H1 (cell line): ENCODE measurements at regions of chr3 and their contacts with region 1.

Region 1: DNA sequence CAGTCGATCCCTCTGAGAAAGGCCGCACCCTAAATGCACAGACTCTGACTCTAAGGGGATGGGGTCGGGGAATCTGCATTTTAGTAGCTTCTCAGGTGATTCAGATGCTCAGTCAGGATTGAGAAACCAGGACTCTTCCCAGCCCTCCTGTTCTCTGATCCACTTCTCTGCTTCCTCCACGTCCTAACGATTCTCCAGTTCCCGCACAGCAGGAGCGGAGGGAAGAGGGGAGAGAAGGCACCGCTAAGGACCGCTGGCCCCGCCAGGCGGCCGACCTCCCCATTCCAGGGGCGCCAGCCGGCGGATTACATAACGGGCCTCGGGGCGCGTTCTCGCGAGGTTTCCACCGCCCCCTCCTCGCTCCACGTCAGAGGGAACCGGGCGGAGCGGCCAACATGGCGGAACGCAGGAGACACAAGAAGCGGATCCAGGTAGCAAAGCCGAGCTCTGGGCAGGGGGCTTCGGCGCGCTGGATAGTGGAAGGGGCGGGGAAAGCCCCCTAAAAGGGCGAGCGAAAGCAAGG is at the start of gene SEC62:
- DNase-seq: peak; percentile 85 to 98
- H3K4me3 ChIP-seq: peak within 1 kb of the TSS; percentile 85 to 98 (median 90)
- H3K27ac ChIP-seq: peak within 1 kb of the TSS; percentile 82
- H3K4me1 ChIP-seq: peaks cover 0 to 12% (median 1%) of the 10 kb centered on the region in 4 experiments; a peak in 3 of 7 replicates
- H3K27me3 ChIP-seq: no peaks in the 10 kb centered on the region
- CTCF ChIP-seq: peak; percentile 38 to 68 (median 47)
- EP300 ChIP-seq: peak in 1 of 2 experiments; percentile 65; a peak in 1 of 3 replicates
- POLR2A ChIP-seq: peak; percentile 93 to 95
- RAD21 ChIP-seq: peak; percentile 61 to 72
- total RNA-seq, gene SEC62: 67.8 and 68.1 TPM in 2 replicates

Region 2: GRCh38 chr3:169863458-169863899 is 103.0 kb before region 1 on chr3:
- CTCF ChIA-PET with region 1: interaction called, 37 read pairs
- POLR2A ChIA-PET with region 1: interaction called, 21 read pairs
- DNase-seq: peak; percentile 58 to 87
- H3K4me3 ChIP-seq: no peak overlapping the region
- H3K27ac ChIP-seq: no peak overlapping the region
- H3K4me1 ChIP-seq: peaks cover 2 to 5% (median 4%) of the 10 kb centered on the region in 4 experiments; a peak in 5 of 7 replicates
- H3K27me3 ChIP-seq: no peaks in the 10 kb centered on the region
- CTCF ChIP-seq: peak; percentile 62 to 95 (median 78)
- EP300 ChIP-seq: no peak
- POLR2A ChIP-seq: no peak
- RAD21 ChIP-seq: peak; percentile 93 to 96

Region 3: GRCh38 chr3:169948559-169949448 is 17.7 kb before region 1 on chr3:
- CTCF ChIA-PET with region 1: no interaction called
- POLR2A ChIA-PET with region 1: interaction called, 22 read pairs
- DNase-seq: no peak
- H3K4me3 ChIP-seq: no peak overlapping the region
- H3K27ac ChIP-seq: no peak overlapping the region
- H3K4me1 ChIP-seq: no peaks in the 10 kb centered on the region
- H3K27me3 ChIP-seq: no peaks in the 10 kb centered on the region
- CTCF ChIP-seq: no peak
- EP300 ChIP-seq: no peak
- POLR2A ChIP-seq: no peak
- RAD21 ChIP-seq: no peak

Region 4: DNA sequence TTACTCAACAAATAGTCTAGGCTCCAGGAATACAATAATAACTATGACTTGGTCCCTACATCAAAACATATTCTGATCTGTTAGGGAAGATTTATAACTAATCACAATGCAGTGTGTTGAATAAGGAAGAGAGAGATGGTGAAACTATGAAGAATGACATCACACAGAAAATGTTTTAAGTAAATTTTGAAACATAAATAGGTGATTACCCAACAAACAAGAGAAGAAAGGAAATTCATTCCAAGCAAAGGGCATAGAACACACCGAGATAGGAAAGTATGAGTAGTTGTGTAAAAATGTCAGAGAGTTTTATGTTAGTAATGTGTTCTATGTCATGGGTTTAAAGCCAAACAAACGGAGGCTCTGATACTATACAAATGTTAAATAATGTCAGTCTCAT is 13.6 kb after region 1 on chr3:
- CTCF ChIA-PET with region 1: interaction called, 3 read pairs
- POLR2A ChIA-PET with region 1: interaction called, 16 read pairs
- DNase-seq: no peak
- H3K4me3 ChIP-seq: no peak overlapping the region
- H3K27ac ChIP-seq: no peak overlapping the region
- H3K4me1 ChIP-seq: no peaks in the 10 kb centered on the region
- H3K27me3 ChIP-seq: no peaks in the 10 kb centered on the region
- CTCF ChIP-seq: no peak
- EP300 ChIP-seq: no peak
- POLR2A ChIP-seq: no peak
- RAD21 ChIP-seq: no peak

Region 5: DNA sequence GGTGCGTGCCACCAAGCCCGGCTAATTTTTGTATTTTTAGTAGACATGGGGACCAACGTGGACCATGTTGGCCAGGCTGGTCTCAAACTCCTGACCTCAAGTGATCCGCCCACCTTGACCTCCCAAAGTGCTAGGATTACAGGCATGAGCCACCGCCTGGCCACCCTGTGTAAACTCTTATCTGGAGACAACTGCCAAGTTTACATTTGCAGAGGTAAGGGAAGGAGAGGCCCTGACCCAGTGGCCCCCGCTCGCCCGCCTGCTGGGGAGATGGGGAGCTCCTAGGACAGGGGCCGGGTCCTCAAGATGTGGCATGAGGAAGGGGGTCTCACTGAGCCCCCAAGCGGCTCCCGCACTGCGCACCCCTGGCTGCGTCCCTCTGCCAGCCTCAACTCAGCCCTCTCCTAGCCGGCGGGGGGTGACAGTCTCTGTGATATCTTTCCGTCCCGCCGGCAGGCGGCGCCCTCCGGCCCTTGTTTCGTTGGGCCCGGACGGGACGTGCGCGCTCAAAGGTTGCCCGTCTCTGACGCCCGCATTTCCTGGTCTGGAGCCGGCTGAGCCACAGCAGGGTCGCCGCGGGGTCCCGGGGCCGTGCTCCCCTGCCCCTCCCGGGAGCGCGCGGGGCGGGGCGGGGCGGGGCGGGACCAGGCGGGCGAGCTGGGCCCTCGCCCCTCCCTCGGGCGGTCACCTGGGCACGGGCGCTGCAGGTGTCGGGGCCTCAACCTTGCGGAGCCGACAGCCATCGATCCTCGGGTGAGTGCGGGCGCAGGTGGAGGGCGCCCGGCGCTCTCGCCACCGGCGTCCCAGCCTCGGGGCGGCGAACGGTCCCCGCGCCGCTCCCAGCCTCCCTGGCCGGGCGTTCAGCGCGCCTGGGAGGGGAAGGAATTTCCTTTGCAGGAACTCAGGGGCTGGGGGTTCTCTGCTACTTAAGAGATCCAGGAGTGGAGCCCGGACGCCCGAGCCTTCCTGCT is 71.3 kb after region 1 on chr3 and contains the start of gene GPR160:
- CTCF ChIA-PET with region 1: interaction called, 3 read pairs
- POLR2A ChIA-PET with region 1: interaction called, 12 read pairs
- DNase-seq: peak; percentile 54 to 97
- H3K4me3 ChIP-seq: peak within 1 kb of the TSS; percentile 54 to 81 (median 76)
- H3K27ac ChIP-seq: no peak within 1 kb of the TSS
- H3K4me1 ChIP-seq: peaks cover 0 to 7% (median 5%) of the 10 kb centered on the region in 4 experiments; a peak in 4 of 7 replicates
- H3K27me3 ChIP-seq: no peaks in the 10 kb centered on the region
- CTCF ChIP-seq: peak; percentile 78 to 85 (median 83)
- EP300 ChIP-seq: no peak
- POLR2A ChIP-seq: no peak
- RAD21 ChIP-seq: peak; percentile 39 to 68; a peak in 3 of 4 replicates
- total RNA-seq, gene GPR160: 16.6 and 16.7 TPM in 2 replicates